Mammary epithelial cell (primary cell): ENCODE measurements at regions of chr15 and their contacts with region 1.

Region 1: DNA sequence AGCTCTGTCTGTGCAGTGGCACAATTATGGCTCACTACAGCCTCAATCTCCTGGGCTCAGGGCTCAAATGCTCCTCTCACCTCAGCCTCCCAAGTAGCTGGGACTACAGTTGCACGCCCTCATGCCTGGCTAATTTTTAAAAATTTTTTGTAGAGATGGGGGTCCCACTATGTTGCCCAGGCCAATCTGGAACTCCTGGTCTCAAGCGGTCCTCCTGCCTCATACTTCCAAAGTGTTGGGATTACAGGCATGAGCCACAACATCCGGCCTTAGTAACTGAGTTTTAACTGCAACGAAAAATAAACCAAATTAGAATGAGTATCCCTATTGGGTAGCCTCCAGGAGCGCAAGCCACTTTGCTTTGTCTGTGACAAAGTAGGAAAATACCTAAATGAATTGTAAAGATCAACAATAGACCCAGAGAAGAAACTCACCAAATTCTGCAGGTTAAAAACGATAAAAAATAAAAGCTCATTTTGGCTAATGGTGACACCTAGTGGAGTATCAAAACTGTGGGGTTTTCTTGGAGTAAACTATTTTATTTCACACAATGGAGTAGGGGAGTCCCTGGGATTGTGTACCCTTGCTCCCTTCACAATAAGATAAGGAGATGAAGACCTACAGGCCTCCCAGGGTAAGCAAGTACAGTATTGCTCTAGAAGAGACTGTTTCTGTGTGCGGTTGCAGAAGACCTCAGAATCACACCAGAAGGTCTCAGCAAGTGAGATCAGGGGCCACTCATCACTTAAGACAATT is 21.0 kb upstream of the CA12 start:
- DNase-seq: peak; percentile 24
- H3K4me3 ChIP-seq: no peak overlapping the region
- H3K27ac ChIP-seq: no peak overlapping the region
- H3K4me1 ChIP-seq: peaks cover 10% of the 10 kb centered on the region
- H3K27me3 ChIP-seq: no peaks in the 10 kb centered on the region
- CTCF ChIP-seq: peak; percentile 60 to 62

Region 2: GRCh38 chr15:63288778-63289378 is 113.8 kb before region 1 on chr15:
- CTCF ChIA-PET with region 1: no interaction called
- dilution Hi-C with region 1: no loop called
- in situ Hi-C with region 1: loop called (anchors 5 kb)
- intact Hi-C with region 1: loop called (anchors 1 kb)
- DNase-seq: peak; percentile 36
- H3K4me3 ChIP-seq: no peak overlapping the region
- H3K27ac ChIP-seq: no peak overlapping the region
- H3K4me1 ChIP-seq: peaks cover 6% of the 10 kb centered on the region
- H3K27me3 ChIP-seq: no peaks in the 10 kb centered on the region
- CTCF ChIP-seq: peak; percentile 59 to 72

Region 3: GRCh38 chr15:63306492-63307073 is 96.1 kb before region 1 on chr15:
- CTCF ChIA-PET with region 1: no interaction called
- dilution Hi-C with region 1: loop called (anchors 5 kb)
- in situ Hi-C with region 1: no loop called
- intact Hi-C with region 1: no loop called
- DNase-seq: no peak
- H3K4me3 ChIP-seq: no peak overlapping the region
- H3K27ac ChIP-seq: no peak overlapping the region
- H3K4me1 ChIP-seq: peaks cover 11% of the 10 kb centered on the region
- H3K27me3 ChIP-seq: no peaks in the 10 kb centered on the region
- CTCF ChIP-seq: no peak

Region 4: DNA sequence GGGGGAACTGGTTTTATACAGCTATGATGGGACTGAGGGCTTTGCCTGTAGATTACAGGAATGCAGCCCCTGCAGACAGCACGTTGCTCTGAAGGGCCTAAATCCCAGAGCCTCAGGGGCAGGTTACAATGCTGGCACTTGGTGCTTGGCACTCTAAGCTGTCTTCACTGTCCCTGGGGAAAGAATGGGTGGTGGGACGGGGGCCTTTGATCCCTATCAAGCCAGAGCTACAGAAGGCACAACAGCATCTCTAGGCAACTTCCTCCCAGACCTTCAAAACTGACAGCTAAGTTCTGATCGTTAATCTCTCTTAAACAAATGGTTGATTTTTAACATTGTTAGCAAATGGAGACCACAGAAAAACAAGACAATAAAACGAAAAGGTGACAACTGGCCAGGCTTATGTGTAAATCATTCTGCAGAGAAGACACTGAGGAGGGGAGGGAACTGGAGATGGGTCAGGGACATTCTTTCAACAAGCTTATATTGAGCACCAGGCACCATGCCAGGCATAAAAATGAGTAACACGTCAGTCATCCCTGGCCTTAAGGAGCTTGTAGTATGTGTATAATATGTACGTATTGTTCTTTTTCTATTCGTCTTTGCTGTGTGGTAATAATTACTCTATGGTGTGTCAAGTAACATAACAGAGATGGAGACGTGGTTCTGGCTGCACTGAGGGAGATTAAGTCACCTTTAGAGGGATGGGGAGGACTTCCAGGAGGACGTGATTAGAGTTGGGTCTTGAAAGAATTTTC is 70.1 kb before region 1 on chr15:
- CTCF ChIA-PET with region 1: no interaction called
- dilution Hi-C with region 1: no loop called
- in situ Hi-C with region 1: no loop called
- intact Hi-C with region 1: loop called (anchors 5 kb)
- DNase-seq: peak; percentile 94
- H3K4me3 ChIP-seq: no peak overlapping the region
- H3K27ac ChIP-seq: peak overlapping the region; percentile 9
- H3K4me1 ChIP-seq: peaks cover 34% of the 10 kb centered on the region
- H3K27me3 ChIP-seq: no peaks in the 10 kb centered on the region
- CTCF ChIP-seq: no peak

Region 5: GRCh38 chr15:63553388-63553791 is 150.7 kb after region 1 on chr15:
- CTCF ChIA-PET with region 1: no interaction called
- dilution Hi-C with region 1: no loop called
- in situ Hi-C with region 1: no loop called
- intact Hi-C with region 1: no loop called
- DNase-seq: peak; percentile 92
- H3K4me3 ChIP-seq: no peak overlapping the region
- H3K27ac ChIP-seq: peak overlapping the region; percentile 57
- H3K4me1 ChIP-seq: peaks cover 22% of the 10 kb centered on the region
- H3K27me3 ChIP-seq: no peaks in the 10 kb centered on the region
- CTCF ChIP-seq: no peak